Heart right ventricle (tissue), 16 donors: ENCODE measurements at regions of chr11 and their contacts with region 1.

Region 1: GRCh38 chr11:46121724-46122477 is 647 bp upstream of the PHF21A start:
- DNase-seq: peak; percentile 73 to 84
- ATAC-seq: peak; percentile 3 to 57 (median 30)
- H3K4me3 ChIP-seq: peak overlapping the region; percentile 51 to 84 (median 74)
- H3K27ac ChIP-seq: peak overlapping the region; percentile 72 to 97 (median 94)
- H3K4me1 ChIP-seq: peaks cover 0 to 37% (median 23%) of the 10 kb centered on the region in 9 donors
- H3K27me3 ChIP-seq: no peaks in the 10 kb centered on the region
- CTCF ChIP-seq: no peak

Region 2: DNA sequence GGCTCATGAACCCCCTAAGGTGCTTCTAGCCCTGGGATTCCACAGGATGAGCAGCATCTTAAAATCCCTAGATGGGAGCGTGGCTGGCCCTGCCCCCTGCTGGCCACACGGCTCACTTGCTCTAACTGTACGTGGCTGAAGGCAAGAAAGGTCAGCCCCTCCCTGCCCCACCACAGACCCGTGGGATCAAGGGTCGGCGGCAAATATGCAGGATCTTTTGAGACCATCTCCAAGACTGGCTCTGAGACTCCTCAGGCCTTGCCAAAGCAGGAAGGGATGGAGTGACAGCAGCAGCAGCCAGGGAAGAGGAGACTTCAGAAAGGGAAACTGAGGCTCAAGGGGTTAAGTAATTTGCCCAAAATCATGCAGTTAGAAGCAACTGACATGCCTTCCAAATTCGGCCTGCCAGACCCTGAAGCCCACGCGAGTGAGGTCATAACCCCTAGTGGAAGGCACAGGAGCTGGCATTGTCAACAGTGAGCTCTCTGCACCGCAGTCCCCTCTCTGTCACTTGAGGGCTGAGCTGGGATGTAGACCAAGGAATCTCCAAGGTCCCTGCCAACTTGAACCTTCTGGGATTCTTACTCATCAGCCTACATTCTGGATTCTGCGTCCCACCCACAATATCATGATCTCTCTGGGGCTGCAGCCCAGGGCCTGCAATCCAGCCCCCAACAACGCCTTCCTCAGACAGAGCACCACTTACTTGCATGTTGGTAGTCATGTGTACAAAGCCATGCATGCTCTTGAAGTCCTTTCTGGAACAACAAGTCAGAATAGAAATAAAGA is 186.9 kb after region 1 on chr11:
- intact Hi-C with region 1: loop called in 2 of 10 experiments (anchors 10 kb)
- DNase-seq: peak; percentile 80 to 82
- ATAC-seq: peak; percentile 73 to 91 (median 85)
- H3K4me3 ChIP-seq: no peak overlapping the region
- H3K27ac ChIP-seq: no peak overlapping the region
- H3K4me1 ChIP-seq: peaks cover 0 to 9% (median 6%) of the 10 kb centered on the region in 9 donors
- H3K27me3 ChIP-seq: no peaks in the 10 kb centered on the region
- CTCF ChIP-seq: peak; percentile 78 to 95 (median 90)

Region 3: GRCh38 chr11:46315033-46315738 is 193.3 kb after region 1 on chr11:
- intact Hi-C with region 1: loop called in 1 of 10 experiments (anchors 10 kb)
- DNase-seq: peak; percentile 57 to 73
- ATAC-seq: peak; percentile 21 to 62 (median 50)
- H3K4me3 ChIP-seq: no peak overlapping the region
- H3K27ac ChIP-seq: peak overlapping the region in 8 of 10 donors; percentile 46 to 88 (median 68)
- H3K4me1 ChIP-seq: peaks cover 0 to 41% (median 26%) of the 10 kb centered on the region in 9 donors
- H3K27me3 ChIP-seq: no peaks in the 10 kb centered on the region
- CTCF ChIP-seq: peak; percentile 77 to 91 (median 82)